Activated CD8-positive, alpha-beta memory T cell treated with anti-CD3 and anti-CD28 coated beads, Interleukin-2, amount 10 ng/mL, durations not matched to agents 7 days and 5 days (primary cell): ENCODE measurements at regions of chr2 and their contacts with region 1.

Region 1: GRCh38 chr2:168118733-168119514 is 128.5 kb downstream of the STK39 start:
- DNase-seq: no peak
- ATAC-seq: peak; percentile 39
- H3K4me3 Mint-ChIP-seq: no peak overlapping the region
- H3K27ac Mint-ChIP-seq: no peak overlapping the region
- H3K4me1 Mint-ChIP-seq: no peaks in the 10 kb centered on the region
- H3K27me3 Mint-ChIP-seq: no peaks in the 10 kb centered on the region

Region 2: GRCh38 chr2:166539340-166540162 is 1579.4 kb before region 1 on chr2:
- CTCF ChIA-PET with region 1: interaction called, 13 read pairs
- DNase-seq: no peak
- ATAC-seq: peak; percentile 75
- H3K4me3 Mint-ChIP-seq: no peak overlapping the region
- H3K27ac Mint-ChIP-seq: no peak overlapping the region
- H3K4me1 Mint-ChIP-seq: no peaks in the 10 kb centered on the region
- H3K27me3 Mint-ChIP-seq: no peaks in the 10 kb centered on the region

Region 3: GRCh38 chr2:167924556-167924955 is 194.4 kb before region 1 on chr2:
- CTCF ChIA-PET with region 1: no interaction called
- DNase-seq: no peak
- ATAC-seq: no peak
- H3K4me3 Mint-ChIP-seq: no peak overlapping the region
- H3K27ac Mint-ChIP-seq: no peak overlapping the region
- H3K4me1 Mint-ChIP-seq: no peaks in the 10 kb centered on the region
- H3K27me3 Mint-ChIP-seq: peaks cover 5% of the 10 kb centered on the region

Region 4: GRCh38 chr2:167964650-167965413 is 154.1 kb before region 1 on chr2:
- CTCF ChIA-PET with region 1: interaction called, 11 read pairs
- DNase-seq: no peak
- ATAC-seq: no peak
- H3K4me3 Mint-ChIP-seq: no peak overlapping the region
- H3K27ac Mint-ChIP-seq: no peak overlapping the region
- H3K4me1 Mint-ChIP-seq: peaks cover 17% of the 10 kb centered on the region
- H3K27me3 Mint-ChIP-seq: no peaks in the 10 kb centered on the region

Region 5: DNA sequence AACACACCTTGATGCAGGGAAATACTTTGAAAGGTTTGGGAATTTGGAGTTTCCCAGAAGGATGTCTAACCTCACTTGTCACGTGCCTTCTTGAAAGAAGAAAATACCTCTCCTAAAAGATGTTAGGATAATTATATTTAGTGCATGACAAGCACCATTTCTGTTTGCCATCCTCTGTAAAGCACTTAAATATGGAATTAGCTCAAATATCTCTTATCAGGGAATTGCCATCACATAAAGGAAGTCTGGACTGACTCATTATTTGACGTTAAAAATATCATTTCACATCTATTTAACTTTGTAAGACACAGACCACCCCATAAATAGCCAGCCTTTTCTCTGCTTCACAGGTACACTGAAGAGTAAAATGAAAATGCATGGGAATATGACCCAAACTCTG is 11.6 kb before region 1 on chr2:
- CTCF ChIA-PET with region 1: interaction called, 27 read pairs
- DNase-seq: no peak
- ATAC-seq: no peak
- H3K4me3 Mint-ChIP-seq: no peak overlapping the region
- H3K27ac Mint-ChIP-seq: no peak overlapping the region
- H3K4me1 Mint-ChIP-seq: no peaks in the 10 kb centered on the region
- H3K27me3 Mint-ChIP-seq: no peaks in the 10 kb centered on the region

Region 6: DNA sequence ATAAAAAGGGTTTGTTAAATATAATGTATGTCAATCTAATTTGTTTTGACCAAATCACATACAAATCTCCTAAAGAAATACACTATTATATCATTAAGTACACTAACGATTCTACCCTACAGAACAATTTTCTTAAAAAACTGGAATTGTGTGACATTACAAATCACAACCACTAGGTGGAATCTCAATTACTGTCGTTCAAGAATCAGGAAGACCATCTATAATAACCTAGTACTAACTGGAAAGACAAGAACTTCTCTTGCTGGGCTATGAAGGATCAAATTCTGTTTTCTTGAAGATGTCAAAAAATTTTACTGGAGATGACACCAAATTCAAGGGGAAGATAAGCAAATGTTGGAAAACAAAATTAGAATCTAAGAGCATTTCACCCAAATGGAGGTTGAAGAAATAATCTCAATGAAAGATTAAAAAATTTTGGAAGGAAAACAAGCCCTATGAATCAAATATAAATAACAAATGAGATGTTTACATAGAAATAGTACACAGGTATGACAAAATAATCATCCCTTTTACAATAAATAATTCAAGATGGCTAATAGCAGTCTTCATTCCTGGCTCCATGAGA is 17.6 kb after region 1 on chr2:
- CTCF ChIA-PET with region 1: interaction called, 13 read pairs
- DNase-seq: no peak
- ATAC-seq: no peak
- H3K4me3 Mint-ChIP-seq: no peak overlapping the region
- H3K27ac Mint-ChIP-seq: no peak overlapping the region
- H3K4me1 Mint-ChIP-seq: peaks cover 9% of the 10 kb centered on the region
- H3K27me3 Mint-ChIP-seq: no peaks in the 10 kb centered on the region